Breast epithelium (tissue), 4 donors: ENCODE measurements at regions of chr6 and their contacts with region 1.

Region 1: DNA sequence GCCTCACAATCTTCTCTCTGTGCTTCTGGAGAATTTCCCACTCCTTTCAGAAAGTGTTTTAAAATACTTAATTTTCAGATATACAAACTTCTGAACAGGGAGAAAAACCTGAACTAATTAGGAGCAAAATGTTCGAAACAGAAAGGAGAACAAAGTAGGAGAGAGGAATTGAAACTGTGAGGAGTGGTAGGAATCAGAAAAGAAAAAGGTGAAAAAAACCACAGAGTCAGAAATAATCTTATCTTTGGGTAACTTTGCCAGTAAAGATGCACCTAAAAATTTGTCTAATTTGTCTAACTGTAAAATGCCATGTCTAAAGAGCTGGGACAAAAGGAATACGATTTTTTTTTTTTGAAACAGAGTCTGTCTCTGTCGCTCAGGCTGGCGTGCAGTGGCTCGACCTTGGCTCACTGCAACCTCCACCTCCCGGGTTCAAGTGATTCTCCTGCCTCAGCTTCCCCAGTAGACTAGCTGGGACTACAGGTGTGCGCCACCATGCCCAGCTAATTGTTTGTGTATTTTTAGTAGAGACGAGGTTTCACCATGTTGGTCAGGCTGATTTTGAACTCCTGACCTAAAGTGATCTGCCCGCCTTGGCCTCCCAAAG is 4.7 kb upstream of the RIPOR2 start:
- DNase-seq: no peak
- H3K4me3 ChIP-seq: no peak overlapping the region
- H3K27ac ChIP-seq: no peak overlapping the region
- H3K4me1 ChIP-seq: no peaks in the 10 kb centered on the region
- H3K27me3 ChIP-seq: no peaks in the 10 kb centered on the region
- CTCF ChIP-seq: no peak
- POLR2A ChIP-seq: no peak

Region 2: DNA sequence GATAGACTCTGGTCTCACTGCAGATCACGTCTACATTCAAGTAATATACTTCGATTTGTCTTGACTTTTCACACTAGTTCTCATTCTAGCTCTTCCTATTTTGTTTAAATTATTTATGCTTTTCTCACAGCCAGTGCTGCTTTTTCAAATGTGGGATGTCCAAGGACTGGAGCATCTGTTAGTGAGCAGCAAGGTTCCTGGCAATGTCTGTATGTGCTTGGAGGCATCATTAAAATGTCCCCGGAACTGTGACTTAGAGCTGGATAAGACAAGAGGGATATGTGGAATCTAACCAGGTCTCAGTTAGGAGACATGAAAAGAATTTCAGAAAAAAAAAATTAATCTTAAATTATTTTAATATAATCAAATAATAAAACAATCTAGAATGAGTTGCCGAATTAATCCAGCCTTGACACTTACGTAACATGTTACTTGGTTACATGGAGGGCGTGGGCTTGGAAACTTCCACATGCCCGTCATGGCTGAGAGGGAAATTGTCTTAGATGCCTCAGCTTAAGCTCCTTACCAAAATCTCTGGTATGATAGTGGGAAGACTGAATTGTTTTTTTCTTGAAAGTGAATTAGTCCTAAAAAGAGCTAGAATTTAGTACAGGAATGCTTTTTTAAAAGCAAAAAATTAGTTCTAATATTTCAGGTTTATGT is 317.4 kb after region 1 on chr6:
- intact Hi-C with region 1: loop called (anchors 5 kb)
- DNase-seq: no peak
- H3K4me3 ChIP-seq: no peak overlapping the region
- H3K27ac ChIP-seq: no peak overlapping the region
- H3K4me1 ChIP-seq: no peaks in the 10 kb centered on the region
- H3K27me3 ChIP-seq: no peaks in the 10 kb centered on the region
- CTCF ChIP-seq: no peak
- POLR2A ChIP-seq: no peak